CD14-positive monocyte (primary cell): ENCODE measurements at regions of chr15 and their contacts with region 1.

Region 1: GRCh38 chr15:83108266-83109226 is 1.1 kb downstream of the TM6SF1 start:
- DNase-seq: peak; percentile 91 to 96 (median 95)
- H3K4me3 ChIP-seq: peak overlapping the region; percentile 62 to 95 (median 66)
- H3K4me3 Mint-ChIP-seq: peak overlapping the region; percentile 95 to 99
- H3K27ac ChIP-seq: peak overlapping the region; percentile 66 to 96
- H3K27ac Mint-ChIP-seq: peak overlapping the region; percentile 95 to 97 (median 96)
- H3K4me1 ChIP-seq: peaks cover 27 to 36% of the 10 kb centered on the region in 2 donors
- H3K4me1 Mint-ChIP-seq: peaks cover 41% of the 10 kb centered on the region
- H3K27me3 ChIP-seq: peaks cover 0 to 4% of the 10 kb centered on the region in 2 donors
- H3K27me3 Mint-ChIP-seq: peaks cover 6 to 25% (median 8%) of the 10 kb centered on the region in 3 donors
- CTCF ChIP-seq: no peak

Region 2: GRCh38 chr15:83066734-83067637 is 41.6 kb before region 1 on chr15 and contains the start of gene BTBD1:
- intact Hi-C with region 1: loop called in 1 of 2 experiments (anchors 5 kb)
- DNase-seq: peak; percentile 71 to 80 (median 76)
- H3K4me3 ChIP-seq: peak within 1 kb of the TSS; percentile 74 to 92 (median 92)
- H3K4me3 Mint-ChIP-seq: peak within 1 kb of the TSS; percentile 87 to 90
- H3K27ac ChIP-seq: peak within 1 kb of the TSS; percentile 52 to 84
- H3K27ac Mint-ChIP-seq: peak within 1 kb of the TSS; percentile 62 to 88 (median 85)
- H3K4me1 ChIP-seq: peaks cover 38 to 48% of the 10 kb centered on the region in 2 donors
- H3K4me1 Mint-ChIP-seq: peaks cover 3% of the 10 kb centered on the region
- H3K27me3 ChIP-seq: no peaks in the 10 kb centered on the region
- H3K27me3 Mint-ChIP-seq: no peaks in the 10 kb centered on the region
- CTCF ChIP-seq: no peak
- polyA plus RNA-seq, gene BTBD1: 18.0 to 48.8 (median 37.2) TPM